RWPE1 (cell line): ENCODE measurements at regions of chr4 and their contacts with region 1.

Region 1: GRCh38 chr4:25367004-25367621 is 9.9 kb upstream of the ANAPC4 start:
- DNase-seq: peak; percentile 20
- H3K27ac ChIP-seq: no peak overlapping the region
- CTCF ChIP-seq: peak; percentile 74

Region 2: GRCh38 chr4:24980064-24980690 is 386.9 kb before region 1 on chr4:
- CTCF ChIA-PET with region 1: interaction called, 14 read pairs
- POLR2A ChIA-PET with region 1: no interaction called
- DNase-seq: peak; percentile 64
- H3K27ac ChIP-seq: no peak overlapping the region
- CTCF ChIP-seq: peak; percentile 89

Region 3: DNA sequence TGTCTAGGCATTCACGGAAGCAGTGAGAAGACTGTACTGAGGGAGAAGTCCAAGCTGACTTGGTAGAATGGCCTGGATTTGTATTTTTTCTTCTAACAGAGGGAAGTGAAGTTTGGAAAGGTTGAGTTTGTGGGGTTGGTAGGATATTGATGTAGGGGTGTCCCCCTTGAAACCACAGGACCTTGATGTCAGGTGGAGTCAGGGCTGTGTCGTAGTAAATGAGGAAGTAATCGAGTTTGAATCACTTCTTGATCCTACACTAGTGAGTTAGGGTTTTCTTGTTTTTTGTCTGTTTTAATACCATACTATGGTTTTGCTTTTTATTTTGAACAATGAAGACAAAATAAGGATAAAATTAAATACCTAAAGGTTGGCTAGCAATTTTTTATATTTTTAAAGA is 20.2 kb before region 1 on chr4:
- CTCF ChIA-PET with region 1: no interaction called
- POLR2A ChIA-PET with region 1: no interaction called
- DNase-seq: no peak
- H3K27ac ChIP-seq: no peak overlapping the region
- CTCF ChIP-seq: no peak

Region 4: DNA sequence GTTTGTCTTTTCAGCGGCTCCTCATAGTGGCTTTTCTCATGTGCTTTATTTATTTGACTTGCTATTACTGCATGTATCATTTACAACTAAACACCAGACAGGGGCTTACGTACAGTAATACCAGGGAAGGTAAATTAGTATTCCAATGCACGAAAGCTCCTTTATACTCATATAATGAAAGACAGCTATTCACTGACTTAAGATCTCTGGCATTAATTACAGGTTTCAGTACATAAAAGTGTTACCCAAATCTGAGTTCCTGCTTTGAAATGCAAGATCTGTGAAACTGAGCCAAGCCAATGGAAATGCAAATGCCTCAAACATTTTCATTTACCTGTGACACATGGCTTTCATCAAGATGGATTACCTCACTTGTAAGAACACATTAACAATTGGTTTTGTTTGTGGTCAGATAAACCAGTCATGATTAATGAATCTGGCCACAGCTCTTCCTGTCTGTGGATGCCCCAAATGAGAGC is 117.2 kb after region 1 on chr4:
- CTCF ChIA-PET with region 1: no interaction called
- POLR2A ChIA-PET with region 1: no interaction called
- DNase-seq: no peak
- H3K27ac ChIP-seq: no peak overlapping the region
- CTCF ChIP-seq: no peak

Region 5: DNA sequence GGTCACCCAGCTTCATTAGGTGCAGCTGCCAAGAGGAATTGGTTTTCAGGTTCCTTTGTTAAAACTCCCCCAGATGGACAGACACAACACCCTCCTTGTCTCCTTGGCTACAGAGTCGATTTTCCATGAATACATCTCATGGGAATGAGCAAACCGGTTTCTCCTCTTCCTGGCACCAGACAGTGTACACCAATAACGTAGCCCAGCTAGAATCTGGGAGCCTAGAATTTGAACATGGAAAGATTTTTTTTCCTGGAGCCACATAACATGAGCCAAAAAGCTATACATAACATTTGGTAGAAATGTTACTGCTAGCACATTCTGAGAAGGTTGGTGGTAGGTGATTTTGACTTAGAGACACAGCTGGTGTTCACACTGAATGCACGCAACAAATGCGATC is 225.6 kb after region 1 on chr4:
- CTCF ChIA-PET with region 1: no interaction called
- POLR2A ChIA-PET with region 1: no interaction called
- DNase-seq: no peak
- H3K27ac ChIP-seq: no peak overlapping the region
- CTCF ChIP-seq: no peak